ENCODE measurements at regions of chr3 and their contacts with region 1.

Region 1: DNA sequence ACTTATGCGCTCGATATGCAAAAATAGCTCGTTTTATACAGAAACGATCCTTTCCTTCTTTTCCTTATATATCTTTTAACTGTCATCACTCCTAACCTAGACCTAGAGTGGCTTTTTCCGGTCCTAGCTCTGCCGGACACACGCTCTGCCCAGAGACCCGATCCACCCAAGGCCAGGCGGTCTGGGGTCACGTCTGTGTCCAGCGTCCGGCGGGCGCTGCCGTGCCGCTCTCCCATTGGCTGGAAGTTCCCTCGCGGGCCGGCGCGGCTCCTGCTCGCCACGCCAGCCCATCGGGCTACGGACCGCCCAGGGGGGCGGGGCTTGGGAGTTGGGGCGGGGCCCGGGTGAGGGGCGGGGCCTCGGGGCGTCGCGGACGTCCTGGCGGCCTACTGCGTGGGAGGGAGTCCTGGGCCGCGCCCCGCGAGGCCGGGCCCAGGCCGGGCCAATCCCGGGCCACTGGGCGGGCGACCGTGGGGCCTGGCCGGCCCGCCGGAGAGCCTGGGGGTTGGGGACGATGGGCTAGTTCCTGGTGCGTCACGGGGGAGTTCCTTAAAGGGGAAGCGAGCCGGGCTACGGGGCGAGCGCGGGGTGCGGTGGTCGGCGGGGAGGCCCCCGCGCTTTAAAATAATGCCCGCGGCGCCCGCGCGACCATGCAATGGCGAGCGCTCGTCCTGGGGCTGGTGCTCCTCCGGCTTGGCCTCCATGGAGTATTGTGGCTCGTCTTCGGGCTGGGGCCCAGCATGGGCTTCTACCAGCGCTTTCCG is at the start of gene EDEM1:
- DNase-seq: peak; percentile 76
- ATAC-seq: peak; percentile 82
- H3K4me3 ChIP-seq: peak within 1 kb of the TSS; percentile 88
- H3K27ac ChIP-seq: peak within 1 kb of the TSS; percentile 96
- H3K4me1 ChIP-seq: peaks cover 29% of the 10 kb centered on the region
- H3K27me3 ChIP-seq: no peaks in the 10 kb centered on the region
- CTCF ChIP-seq: no peak
- EP300 ChIP-seq: no peak; a peak in 1 of 4 replicates
- POLR2A ChIP-seq: peak; percentile 78
- RAD21 ChIP-seq: no peak
- polyA plus RNA-seq, gene EDEM1: 18.9 to 48.0 TPM

Region 2: DNA sequence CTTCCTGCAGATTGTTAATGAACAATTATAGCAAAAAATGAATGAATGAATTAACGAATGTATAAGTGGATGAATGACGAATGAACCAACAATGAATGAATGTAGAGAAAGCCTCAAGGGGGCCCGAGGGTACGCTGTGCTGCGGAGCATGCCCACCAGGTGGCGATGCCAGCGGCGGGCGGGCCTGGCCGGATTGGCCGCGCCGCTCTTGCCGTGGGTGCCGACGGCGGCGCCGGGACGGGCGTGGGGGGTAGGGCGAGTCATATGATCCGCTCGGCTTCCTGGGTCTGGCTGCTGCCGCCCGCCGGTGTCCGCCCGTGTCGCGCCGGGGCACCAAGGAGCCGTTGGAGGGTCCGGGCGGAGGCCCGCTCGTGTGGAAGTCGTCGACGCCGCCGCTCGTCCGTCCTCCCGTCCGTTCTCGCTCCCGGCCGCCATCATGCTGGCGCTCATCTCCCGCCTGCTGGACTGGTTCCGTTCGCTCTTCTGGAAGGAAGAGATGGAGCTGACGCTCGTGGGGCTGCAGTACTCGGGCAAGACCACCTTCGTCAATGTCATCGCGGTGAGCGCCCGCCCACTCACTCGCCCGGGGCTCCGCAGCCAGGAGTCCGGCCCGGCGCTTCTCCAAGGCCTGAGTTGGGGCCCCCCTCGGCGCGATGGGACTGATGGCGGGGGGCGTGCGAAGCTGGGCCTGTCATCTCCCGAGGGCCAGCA is 65.2 kb before region 1 on chr3 and contains the start of gene ARL8B:
- CTCF ChIA-PET with region 1: interaction called, 17 read pairs
- POLR2A ChIA-PET with region 1: interaction called, 8 read pairs
- RAD21 ChIA-PET with region 1: interaction called, 31 read pairs
- SMC1A ChIA-PET with region 1: interaction called, 22 read pairs
- in situ Hi-C with region 1: no loop called
- intact Hi-C with region 1: loop called (anchors 1 kb)
- DNase-seq: no peak
- ATAC-seq: peak; percentile 97
- H3K4me3 ChIP-seq: peak within 1 kb of the TSS; percentile 76
- H3K27ac ChIP-seq: peak within 1 kb of the TSS; percentile 78
- H3K4me1 ChIP-seq: no peaks in the 10 kb centered on the region
- H3K27me3 ChIP-seq: no peaks in the 10 kb centered on the region
- CTCF ChIP-seq: peak; percentile 88 to 99 (median 97); a peak in 5 of 6 replicates
- EP300 ChIP-seq: peak; percentile 36 to 66; a peak in 2 of 4 replicates
- POLR2A ChIP-seq: peak; percentile 98
- RAD21 ChIP-seq: peak; percentile 51; the same call in 1 of the 2 replicates
- polyA plus RNA-seq, gene ARL8B: 36.5 to 38.5 TPM

Region 3: GRCh38 chr3:5144316-5145011 is 42.9 kb before region 1 on chr3:
- CTCF ChIA-PET with region 1: interaction called, 163 read pairs
- POLR2A ChIA-PET with region 1: interaction called, 67 read pairs
- RAD21 ChIA-PET with region 1: interaction called, 93 read pairs
- SMC1A ChIA-PET with region 1: interaction called, 284 read pairs
- in situ Hi-C with region 1: no loop called
- intact Hi-C with region 1: loop called (anchors 2 kb)
- DNase-seq: no peak
- ATAC-seq: no peak
- H3K4me3 ChIP-seq: no peak overlapping the region
- H3K27ac ChIP-seq: no peak overlapping the region
- H3K4me1 ChIP-seq: peaks cover 31% of the 10 kb centered on the region
- H3K27me3 ChIP-seq: no peaks in the 10 kb centered on the region
- CTCF ChIP-seq: no peak
- EP300 ChIP-seq: no peak
- POLR2A ChIP-seq: no peak
- RAD21 ChIP-seq: no peak

Region 4: GRCh38 chr3:5162102-5162501 is 25.2 kb before region 1 on chr3:
- CTCF ChIA-PET with region 1: interaction called, 9 read pairs
- POLR2A ChIA-PET with region 1: interaction called, 36 read pairs
- RAD21 ChIA-PET with region 1: interaction called, 8 read pairs
- SMC1A ChIA-PET with region 1: interaction called, 30 read pairs
- in situ Hi-C with region 1: no loop called
- intact Hi-C with region 1: no loop called
- DNase-seq: no peak
- ATAC-seq: peak; percentile 19
- H3K4me3 ChIP-seq: no peak overlapping the region
- H3K27ac ChIP-seq: no peak overlapping the region
- H3K4me1 ChIP-seq: peaks cover 17% of the 10 kb centered on the region
- H3K27me3 ChIP-seq: no peaks in the 10 kb centered on the region
- CTCF ChIP-seq: no peak
- EP300 ChIP-seq: no peak
- POLR2A ChIP-seq: no peak
- RAD21 ChIP-seq: no peak

Region 5: DNA sequence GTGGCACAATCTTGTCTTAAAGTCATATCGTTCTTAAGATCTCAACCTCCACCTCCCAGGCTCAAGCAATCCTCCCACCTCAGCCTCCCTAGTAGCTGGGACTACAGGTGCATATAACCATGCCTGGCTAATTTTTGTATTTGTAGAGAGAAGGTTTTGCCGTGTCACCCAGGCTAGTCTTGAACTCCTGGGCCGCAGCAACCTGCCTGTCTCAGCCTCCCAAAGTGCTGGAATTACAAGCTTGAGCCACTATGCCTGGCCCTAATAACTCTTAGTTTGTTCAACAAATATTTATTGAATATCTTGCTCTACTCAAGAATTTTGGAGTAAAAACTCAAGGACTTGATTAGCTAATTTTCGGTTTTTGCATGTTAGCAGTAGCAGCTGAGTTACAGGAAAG is 19.2 kb before region 1 on chr3:
- CTCF ChIA-PET with region 1: interaction called, 9 read pairs
- POLR2A ChIA-PET with region 1: interaction called, 36 read pairs
- RAD21 ChIA-PET with region 1: interaction called, 8 read pairs
- SMC1A ChIA-PET with region 1: interaction called, 30 read pairs
- in situ Hi-C with region 1: no loop called
- intact Hi-C with region 1: no loop called
- DNase-seq: no peak
- ATAC-seq: no peak
- H3K4me3 ChIP-seq: no peak overlapping the region
- H3K27ac ChIP-seq: no peak overlapping the region
- H3K4me1 ChIP-seq: peaks cover 7% of the 10 kb centered on the region; the same call in 1 of the 2 replicates
- H3K27me3 ChIP-seq: no peaks in the 10 kb centered on the region
- CTCF ChIP-seq: no peak
- EP300 ChIP-seq: no peak
- POLR2A ChIP-seq: no peak
- RAD21 ChIP-seq: no peak

Region 6: DNA sequence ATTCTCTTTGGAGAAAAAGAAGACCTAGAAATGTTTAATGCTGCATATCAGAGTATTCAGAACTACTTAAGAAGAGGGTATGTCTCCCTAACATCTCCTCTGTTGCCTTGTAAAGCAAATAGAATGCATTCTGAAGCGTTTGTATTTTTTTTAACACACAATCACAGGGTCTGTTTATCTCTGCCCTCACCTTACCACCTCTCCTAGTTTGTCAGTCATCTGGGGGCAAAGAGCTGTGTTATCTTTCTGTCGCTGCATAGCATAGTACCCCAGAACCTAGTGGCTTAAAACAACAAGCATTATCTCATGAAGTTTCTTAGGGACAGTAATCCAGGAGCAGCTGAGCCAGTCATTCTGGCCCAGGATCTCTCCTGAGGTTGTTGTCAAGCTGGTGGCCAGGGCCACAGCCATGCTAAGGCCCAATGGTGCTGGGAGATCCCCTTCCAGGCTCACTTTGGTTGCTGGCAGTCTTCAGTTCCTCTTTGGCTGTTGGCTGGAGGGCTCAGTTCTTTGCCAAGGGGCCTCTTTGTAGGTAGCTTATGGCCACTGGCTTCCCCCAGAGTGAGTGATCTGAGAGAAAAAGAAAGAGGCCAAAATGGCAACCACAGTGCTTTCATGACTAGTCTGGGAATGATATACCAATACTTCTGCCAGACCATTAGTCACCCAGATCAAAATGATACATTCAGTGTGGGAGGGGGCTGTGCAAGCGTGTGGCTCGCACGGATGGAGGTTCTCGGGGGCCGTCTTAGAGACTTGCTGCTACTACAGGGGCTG is 18.0 kb after region 1 on chr3:
- CTCF ChIA-PET with region 1: interaction called, 3 read pairs
- POLR2A ChIA-PET with region 1: interaction called, 15 read pairs
- RAD21 ChIA-PET with region 1: interaction called, 11 read pairs
- SMC1A ChIA-PET with region 1: interaction called, 23 read pairs
- in situ Hi-C with region 1: no loop called
- intact Hi-C with region 1: no loop called
- DNase-seq: peak; percentile 86
- ATAC-seq: peak; percentile 98
- H3K4me3 ChIP-seq: no peak overlapping the region
- H3K27ac ChIP-seq: peak overlapping the region; percentile 38
- H3K4me1 ChIP-seq: peaks cover 9% of the 10 kb centered on the region
- H3K27me3 ChIP-seq: no peaks in the 10 kb centered on the region
- CTCF ChIP-seq: no peak
- EP300 ChIP-seq: peak; percentile 62 to 88; a peak in 3 of 4 replicates
- POLR2A ChIP-seq: 0 out of 2 replicates have a peak, but pooled peaks have one; percentile 40
- RAD21 ChIP-seq: peak; percentile 29; the same call in 1 of the 2 replicates

Measured in GM12878 (cell line).